ENCODE measurements at regions of chr1 and their contacts with region 1.

Region 1: GRCh38 chr1:236603991-236604904 is at the start of gene HEATR1:
- DNase-seq: peak; percentile 99
- H3K4me3 Mint-ChIP-seq: peak within 1 kb of the TSS; percentile 81
- H3K27ac Mint-ChIP-seq: peak within 1 kb of the TSS; percentile 87
- H3K4me1 Mint-ChIP-seq: peaks cover 14% of the 10 kb centered on the region
- H3K27me3 Mint-ChIP-seq: peaks cover 2% of the 10 kb centered on the region
- CTCF ChIP-seq: no peak
- total RNA-seq, gene HEATR1: 90.6 and 128 TPM in 2 replicates

Region 2: GRCh38 chr1:235532360-235532759 is 1071.9 kb before region 1 on chr1:
- CTCF ChIA-PET with region 1: no interaction called
- POLR2A ChIA-PET with region 1: no interaction called
- intact Hi-C with region 1: no loop called
- DNase-seq: peak; percentile 75
- H3K4me3 Mint-ChIP-seq: no peak overlapping the region
- H3K27ac Mint-ChIP-seq: peak overlapping the region; percentile 20
- H3K4me1 Mint-ChIP-seq: peaks cover 22% of the 10 kb centered on the region
- H3K27me3 Mint-ChIP-seq: no peaks in the 10 kb centered on the region
- CTCF ChIP-seq: no peak

Region 3: GRCh38 chr1:236615399-236616148 is 11.3 kb after region 1 on chr1:
- CTCF ChIA-PET with region 1: interaction called, 13 read pairs
- POLR2A ChIA-PET with region 1: interaction called, 12 read pairs
- intact Hi-C with region 1: no loop called
- DNase-seq: no peak
- H3K4me3 Mint-ChIP-seq: no peak overlapping the region
- H3K27ac Mint-ChIP-seq: no peak overlapping the region
- H3K4me1 Mint-ChIP-seq: no peaks in the 10 kb centered on the region
- H3K27me3 Mint-ChIP-seq: peaks cover 43% of the 10 kb centered on the region
- CTCF ChIP-seq: no peak

Region 4: GRCh38 chr1:236753516-236753915 is 149.3 kb after region 1 on chr1:
- CTCF ChIA-PET with region 1: interaction called, 18 read pairs
- POLR2A ChIA-PET with region 1: interaction called, 3 read pairs
- intact Hi-C with region 1: loop called (anchors 5 kb)
- DNase-seq: peak; percentile 59
- H3K4me3 Mint-ChIP-seq: no peak overlapping the region
- H3K27ac Mint-ChIP-seq: no peak overlapping the region
- H3K4me1 Mint-ChIP-seq: peaks cover 5% of the 10 kb centered on the region
- H3K27me3 Mint-ChIP-seq: peaks cover 32% of the 10 kb centered on the region
- CTCF ChIP-seq: peak; percentile 43

Region 5: DNA sequence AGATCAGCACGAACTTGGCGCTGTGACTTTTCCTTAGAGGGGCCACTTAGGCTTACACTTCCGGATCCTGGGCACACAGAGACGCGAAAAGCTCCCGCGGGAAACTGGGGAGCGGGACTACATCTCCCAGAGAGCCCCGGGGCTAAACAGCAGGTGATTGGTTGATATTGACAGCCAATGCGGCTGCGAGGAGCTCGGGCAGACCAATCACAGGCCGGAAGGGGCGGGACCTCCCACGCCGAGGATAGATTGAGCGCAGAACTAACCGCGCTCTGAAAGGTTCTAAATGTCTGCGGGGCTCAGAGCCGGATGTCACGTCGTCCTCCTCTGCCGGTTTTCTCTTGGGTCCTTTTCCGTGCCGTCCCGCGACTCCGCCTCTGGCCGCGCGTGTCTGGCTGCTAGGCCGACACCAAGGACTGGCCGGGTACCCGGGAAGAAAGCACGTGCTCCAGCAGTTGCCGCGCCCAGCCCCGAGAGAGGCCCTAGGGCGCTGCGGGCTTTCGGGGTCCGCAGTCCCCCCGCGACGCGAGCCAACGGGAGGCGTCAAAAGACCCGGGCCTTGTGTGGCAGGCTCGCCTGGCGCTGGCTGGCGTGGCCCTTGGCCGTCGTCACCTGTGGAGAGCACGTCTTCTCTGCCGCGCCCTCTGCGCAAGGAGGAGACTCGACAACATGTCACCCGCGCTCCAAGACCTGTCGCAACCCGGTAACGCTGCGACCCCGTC is 190.9 kb after region 1 on chr1 and contains the start of gene MTR:
- CTCF ChIA-PET with region 1: interaction called, 28 read pairs
- POLR2A ChIA-PET with region 1: interaction called, 88 read pairs
- intact Hi-C with region 1: loop called (anchors 2 kb)
- DNase-seq: peak; percentile 100
- H3K4me3 Mint-ChIP-seq: peak within 1 kb of the TSS; percentile 93
- H3K27ac Mint-ChIP-seq: peak within 1 kb of the TSS; percentile 88
- H3K4me1 Mint-ChIP-seq: peaks cover 34% of the 10 kb centered on the region
- H3K27me3 Mint-ChIP-seq: peaks cover 15% of the 10 kb centered on the region
- CTCF ChIP-seq: no peak
- total RNA-seq, gene MTR: 54.6 and 59.1 TPM in 2 replicates

Region 6: GRCh38 chr1:237562242-237562823 is 958.1 kb after region 1 on chr1:
- CTCF ChIA-PET with region 1: interaction called, 79 read pairs
- POLR2A ChIA-PET with region 1: interaction called, 3 read pairs
- intact Hi-C with region 1: loop called (anchors 1 kb)
- DNase-seq: peak; percentile 89
- H3K4me3 Mint-ChIP-seq: no peak overlapping the region
- H3K27ac Mint-ChIP-seq: no peak overlapping the region
- H3K4me1 Mint-ChIP-seq: no peaks in the 10 kb centered on the region
- H3K27me3 Mint-ChIP-seq: no peaks in the 10 kb centered on the region
- CTCF ChIP-seq: peak; percentile 79